Esophagus muscularis mucosa (tissue), 4 donors: ENCODE measurements at regions of chr16 and their contacts with region 1.

Region 1: DNA sequence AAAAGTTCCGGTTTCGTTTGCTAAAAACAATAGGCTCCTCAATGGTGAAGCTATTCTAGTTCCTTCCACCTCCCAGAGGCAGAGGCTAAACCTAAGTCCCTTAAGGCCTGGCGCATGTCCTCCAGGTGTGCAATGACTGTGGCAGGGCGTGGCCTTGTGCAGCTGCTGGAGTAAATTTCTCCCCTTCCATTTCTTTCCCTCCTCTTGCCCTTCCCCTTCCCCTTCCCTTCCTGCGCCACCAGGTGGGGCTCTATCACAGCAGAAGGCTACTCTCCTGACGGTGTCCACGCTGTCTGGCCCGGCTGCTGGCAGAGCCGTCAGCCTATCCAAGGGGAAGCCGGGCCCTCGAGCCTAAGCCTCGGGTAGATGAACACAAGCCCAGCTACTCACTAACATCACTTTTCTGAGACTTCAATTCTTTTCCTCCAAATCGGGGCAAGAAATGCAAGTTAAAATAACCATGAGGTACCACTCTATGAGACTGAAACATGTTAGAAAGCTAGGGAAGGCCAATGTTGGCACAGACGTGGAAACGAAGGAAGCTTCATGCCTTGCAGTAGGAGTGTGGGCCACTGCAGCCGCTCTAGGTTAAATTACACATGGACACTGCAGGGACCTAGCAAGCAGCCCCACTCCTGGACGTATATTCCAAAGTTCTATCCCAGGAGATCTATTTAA is 34.4 kb downstream of the C16orf78 start:
- DNase-seq: no peak
- H3K4me3 ChIP-seq: no peak overlapping the region
- H3K27ac ChIP-seq: no peak overlapping the region
- H3K4me1 ChIP-seq: peaks cover 0 to 10% (median 7%) of the 10 kb centered on the region in 4 donors
- H3K27me3 ChIP-seq: no peaks in the 10 kb centered on the region
- CTCF ChIP-seq: peak; percentile 91 to 96 (median 92)
- EP300 ChIP-seq: no peak
- POLR2A ChIP-seq: no peak

Region 2: GRCh38 chr16:49592546-49593423 is 184.8 kb after region 1 on chr16:
- intact Hi-C with region 1: loop called (anchors 5 kb)
- DNase-seq: no peak
- H3K4me3 ChIP-seq: no peak overlapping the region
- H3K27ac ChIP-seq: no peak overlapping the region
- H3K4me1 ChIP-seq: peaks cover 3 to 31% (median 28%) of the 10 kb centered on the region in 4 donors
- H3K27me3 ChIP-seq: no peaks in the 10 kb centered on the region
- CTCF ChIP-seq: peak; percentile 57 to 84 (median 58)
- EP300 ChIP-seq: no peak
- POLR2A ChIP-seq: no peak

Region 3: DNA sequence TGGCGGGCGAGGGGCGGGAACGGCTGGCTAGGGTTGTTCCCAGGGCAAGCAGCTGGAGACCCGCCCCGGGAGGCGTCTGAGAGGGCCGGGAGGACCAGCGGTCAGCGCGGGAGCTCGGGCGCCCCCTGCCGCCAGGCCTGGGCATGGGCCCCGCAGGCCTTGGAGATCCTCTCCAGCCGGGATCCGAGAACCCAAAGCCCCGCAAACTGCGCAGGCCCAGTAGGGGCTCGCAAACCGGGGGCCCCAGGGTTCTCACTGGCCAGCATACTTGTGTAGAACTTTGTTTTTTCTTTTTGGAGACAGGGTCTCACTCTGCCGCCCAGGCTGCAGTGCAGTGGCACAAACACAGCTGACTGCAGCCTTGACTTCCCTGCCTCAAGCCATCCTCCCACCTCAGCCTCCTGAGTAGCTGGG is 468.7 kb after region 1 on chr16:
- intact Hi-C with region 1: loop called (anchors 5 kb)
- DNase-seq: no peak
- H3K4me3 ChIP-seq: peak overlapping the region; percentile 45 to 57 (median 50)
- H3K27ac ChIP-seq: peak overlapping the region in 1 of 4 donors; percentile 22
- H3K4me1 ChIP-seq: peaks cover 0 to 13% (median 11%) of the 10 kb centered on the region in 4 donors
- H3K27me3 ChIP-seq: peaks cover 0 to 23% (median 0%) of the 10 kb centered on the region in 4 donors
- CTCF ChIP-seq: peak in 2 of 3 experiments; percentile 72 to 89
- EP300 ChIP-seq: no peak
- POLR2A ChIP-seq: no peak

Region 4: GRCh38 chr16:49921791-49922456 is 513.9 kb after region 1 on chr16:
- intact Hi-C with region 1: loop called (anchors 5 kb)
- DNase-seq: no peak
- H3K4me3 ChIP-seq: no peak overlapping the region
- H3K27ac ChIP-seq: no peak overlapping the region
- H3K4me1 ChIP-seq: no peaks in the 10 kb centered on the region
- H3K27me3 ChIP-seq: no peaks in the 10 kb centered on the region
- CTCF ChIP-seq: peak; percentile 51 to 56 (median 54)
- EP300 ChIP-seq: no peak
- POLR2A ChIP-seq: no peak